GM23248 (cell line): ENCODE measurements at regions of chr10 and their contacts with region 1.

Region 1: GRCh38 chr10:46284293-46285229 is 2.2 kb upstream of the ANTXRL start:
- DNase-seq: peak; percentile 92
- H3K4me3 ChIP-seq: peak overlapping the region; percentile 77
- H3K27ac ChIP-seq: peak overlapping the region; percentile 48
- H3K4me1 ChIP-seq: peaks cover 15% of the 10 kb centered on the region; the same call in 1 of the 2 replicates
- H3K27me3 ChIP-seq: no peaks in the 10 kb centered on the region

Region 2: GRCh38 chr10:45514291-45515270 is 770.0 kb before region 1 on chr10:
- in situ Hi-C with region 1: no loop called
- DNase-seq: peak; percentile 26
- H3K4me3 ChIP-seq: no peak overlapping the region
- H3K27ac ChIP-seq: no peak overlapping the region
- H3K4me1 ChIP-seq: peaks cover 12% of the 10 kb centered on the region
- H3K27me3 ChIP-seq: no peaks in the 10 kb centered on the region

Region 3: DNA sequence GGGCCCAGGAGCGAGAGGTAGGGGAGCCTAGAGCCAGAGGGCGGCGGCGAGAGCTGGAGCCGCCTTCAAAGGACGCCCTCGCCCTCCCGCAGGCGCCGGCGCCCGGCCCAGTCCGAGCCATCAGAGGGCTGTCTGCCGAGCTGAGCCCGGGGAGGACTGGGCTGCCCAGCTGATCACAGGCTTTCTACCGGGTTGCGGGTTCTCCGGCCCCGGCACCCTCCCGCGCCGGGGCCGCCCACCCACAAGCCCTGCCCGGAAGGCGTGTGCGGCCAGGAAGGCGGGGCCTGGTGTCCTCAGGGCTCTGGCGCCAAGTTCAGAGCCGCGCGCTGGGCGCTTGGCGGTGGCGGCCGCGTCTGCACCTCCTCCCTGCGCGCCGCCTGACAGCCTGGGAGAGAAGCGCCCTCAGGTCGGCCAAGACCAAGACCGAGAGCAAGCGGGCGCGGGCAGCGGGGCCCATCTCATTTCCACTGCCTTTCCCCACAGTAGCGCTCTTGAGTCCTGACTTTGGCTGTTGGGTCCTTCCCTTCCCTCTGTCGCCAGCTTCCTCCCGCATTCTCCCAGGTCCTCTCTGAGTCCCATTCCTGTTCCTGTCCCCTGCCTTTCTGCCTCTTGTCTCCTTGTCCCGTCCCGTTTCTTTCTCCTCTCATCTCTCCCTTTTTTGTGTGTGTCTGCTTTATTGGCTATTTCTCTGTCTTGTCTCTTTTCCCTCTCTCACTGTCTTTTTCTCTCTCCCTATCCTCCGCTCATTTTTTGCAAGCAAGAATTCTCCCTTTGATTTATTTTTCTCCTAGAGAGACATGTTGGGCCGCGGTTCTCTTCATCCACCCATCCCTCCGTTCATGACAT is 177.9 kb before region 1 on chr10:
- in situ Hi-C with region 1: loop called (anchors 5 kb)
- DNase-seq: peak; percentile 65
- H3K4me3 ChIP-seq: peak overlapping the region; percentile 51
- H3K27ac ChIP-seq: no peak overlapping the region
- H3K4me1 ChIP-seq: no peaks in the 10 kb centered on the region
- H3K27me3 ChIP-seq: no peaks in the 10 kb centered on the region; the same call in 1 of the 2 replicates

Region 4: GRCh38 chr10:47384148-47384921 is 1099.8 kb after region 1 on chr10 and contains the start of gene ZNF488:
- in situ Hi-C with region 1: loop called (anchors 5 kb)
- DNase-seq: peak; percentile 86
- H3K4me3 ChIP-seq: peak within 1 kb of the TSS; percentile 81
- H3K27ac ChIP-seq: no peak within 1 kb of the TSS
- H3K4me1 ChIP-seq: no peaks in the 10 kb centered on the region
- H3K27me3 ChIP-seq: peaks cover 32% of the 10 kb centered on the region
- total RNA-seq, gene ZNF488: not detected in 2 replicates